Ascending aorta (tissue), 2 donors: ENCODE measurements at regions of chr2 and their contacts with region 1.

Region 1: DNA sequence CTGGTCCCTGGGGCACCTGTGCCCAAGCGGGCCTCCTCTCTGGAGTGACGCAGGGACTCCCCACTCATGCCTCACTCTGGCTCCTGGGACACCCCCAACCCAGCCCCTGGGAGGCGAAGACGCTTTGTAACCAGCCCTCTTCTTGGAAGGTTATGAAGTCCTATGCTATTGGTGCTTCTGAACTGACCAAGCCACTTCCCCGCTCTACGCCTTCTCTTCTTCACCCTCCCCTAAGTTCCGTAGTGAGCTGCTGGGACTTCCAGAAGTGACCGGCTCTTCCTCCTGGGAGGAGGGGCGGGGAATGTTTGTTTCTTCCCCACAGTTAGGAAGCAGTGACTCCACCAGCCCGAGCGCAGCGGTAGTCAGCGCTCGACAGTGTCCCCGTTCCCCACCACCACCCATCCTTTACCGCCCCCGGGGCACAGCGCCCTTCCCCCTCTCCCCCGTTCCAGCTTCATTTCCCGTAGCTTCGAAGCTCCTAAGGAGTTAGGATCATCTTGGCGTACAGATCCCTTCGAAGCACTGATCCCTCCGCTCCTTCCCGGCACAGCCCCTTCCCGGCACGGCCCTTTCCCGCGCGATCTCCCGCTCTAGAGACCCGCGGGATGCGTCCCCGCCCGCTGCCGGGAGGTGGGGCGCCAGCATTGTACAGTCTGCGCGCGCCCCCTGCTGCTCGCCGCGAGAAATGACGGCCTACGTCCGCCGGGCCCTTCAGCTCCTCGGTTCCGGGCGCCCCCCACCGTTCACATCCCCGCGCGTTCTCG is 25.3 kb upstream of the NOTO start:
- DNase-seq: peak; percentile 51 to 96
- H3K4me3 ChIP-seq: peak overlapping the region; percentile 46 to 83
- H3K27ac ChIP-seq: peak overlapping the region; percentile 59 to 85
- H3K4me1 ChIP-seq: peaks cover 9 to 19% of the 10 kb centered on the region in 2 donors
- H3K27me3 ChIP-seq: no peaks in the 10 kb centered on the region
- CTCF ChIP-seq: peak; percentile 98 to 99 (median 99)

Region 2: DNA sequence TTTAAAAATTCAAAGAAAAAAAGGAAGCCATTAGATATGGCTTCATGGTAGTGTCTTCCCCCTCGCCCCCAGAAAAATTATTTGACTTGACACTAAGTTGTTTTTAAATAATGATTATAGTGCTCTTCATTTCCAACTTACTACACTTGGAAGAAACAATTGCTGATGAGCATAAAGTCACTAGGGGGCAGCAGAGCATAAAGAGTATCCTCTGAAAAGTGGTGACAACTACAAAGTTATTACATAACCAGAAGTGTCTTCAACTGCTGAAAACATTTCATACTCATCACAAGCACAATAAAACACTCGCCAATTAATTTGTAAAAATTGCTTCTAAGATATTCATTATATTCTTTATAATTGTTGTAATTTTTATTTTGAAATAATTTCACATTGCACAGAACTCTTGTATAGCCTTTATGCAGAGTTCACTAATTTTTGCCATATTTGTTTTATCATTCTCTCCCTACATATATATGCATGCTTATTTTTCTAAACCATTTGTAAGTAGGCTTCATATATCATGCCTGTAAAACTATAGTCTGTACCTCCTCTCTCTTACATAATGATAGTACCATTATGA is 406.1 kb before region 1 on chr2:
- intact Hi-C with region 1: loop called (anchors 10 kb)
- DNase-seq: peak in 1 of 2 donors; percentile 75
- H3K4me3 ChIP-seq: no peak overlapping the region
- H3K27ac ChIP-seq: no peak overlapping the region
- H3K4me1 ChIP-seq: no peaks in the 10 kb centered on the region
- H3K27me3 ChIP-seq: no peaks in the 10 kb centered on the region
- CTCF ChIP-seq: peak; percentile 72 to 85 (median 83)

Region 3: GRCh38 chr2:72993147-72993932 is 183.7 kb before region 1 on chr2:
- intact Hi-C with region 1: loop called (anchors 5 kb)
- DNase-seq: peak in 1 of 2 donors; percentile 64
- H3K4me3 ChIP-seq: no peak overlapping the region
- H3K27ac ChIP-seq: no peak overlapping the region
- H3K4me1 ChIP-seq: no peaks in the 10 kb centered on the region
- H3K27me3 ChIP-seq: no peaks in the 10 kb centered on the region
- CTCF ChIP-seq: peak; percentile 80 to 85 (median 82)

Region 4: DNA sequence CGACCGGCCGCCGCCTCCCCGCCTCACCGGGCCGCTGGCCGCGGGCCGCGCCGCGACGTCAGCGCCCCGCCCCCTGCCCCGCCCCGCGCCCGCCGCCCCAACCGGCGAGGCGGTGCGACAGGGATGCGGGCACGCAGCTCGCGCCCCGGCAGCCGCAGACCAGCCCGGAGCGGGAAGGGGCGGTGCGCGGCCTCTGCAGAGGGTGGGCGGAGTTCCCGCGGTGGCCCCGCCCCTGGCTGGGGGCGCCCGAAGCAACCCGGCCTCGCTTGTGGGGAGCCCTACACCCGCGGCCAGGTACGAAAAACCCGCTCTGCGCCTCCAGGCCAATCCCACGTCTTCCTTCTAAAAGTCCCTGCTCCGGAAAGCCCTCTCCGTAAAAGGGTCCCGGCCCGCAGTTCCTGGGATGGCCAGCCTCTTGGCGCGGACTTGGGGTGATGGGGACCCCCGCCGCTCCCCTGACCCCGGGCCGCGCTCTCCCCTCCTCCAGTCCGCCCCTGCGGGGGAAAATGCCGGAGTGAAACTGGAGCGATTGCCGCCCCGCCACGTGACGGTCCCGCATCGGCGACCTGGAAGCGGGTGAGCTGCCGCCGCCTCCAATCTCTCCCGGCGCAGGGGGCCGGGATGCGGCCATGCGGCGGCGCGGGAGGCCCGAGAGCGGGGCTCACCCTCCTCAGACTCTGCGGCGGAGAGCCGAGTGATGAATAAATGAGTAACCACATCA is 64.0 kb before region 1 on chr2 and contains the start of gene RAB11FIP5:
- intact Hi-C with region 1: loop called (anchors 2 kb)
- DNase-seq: peak in 1 of 2 donors; percentile 90
- H3K4me3 ChIP-seq: peak within 1 kb of the TSS; percentile 78 to 84
- H3K27ac ChIP-seq: peak within 1 kb of the TSS; percentile 92 to 98
- H3K4me1 ChIP-seq: peaks cover 0 to 18% of the 10 kb centered on the region in 2 donors
- H3K27me3 ChIP-seq: no peaks in the 10 kb centered on the region
- CTCF ChIP-seq: peak in 1 of 3 experiments; percentile 12
- total RNA-seq, gene RAB11FIP5: 95.3 TPM

Region 5: GRCh38 chr2:73212448-73213176 is 35.5 kb after region 1 on chr2:
- intact Hi-C with region 1: loop called (anchors 1 kb)
- DNase-seq: peak; percentile 19 to 92
- H3K4me3 ChIP-seq: peak overlapping the region in 1 of 2 donors; percentile 12
- H3K27ac ChIP-seq: peak overlapping the region; percentile 81 to 83
- H3K4me1 ChIP-seq: peaks cover 0 to 20% of the 10 kb centered on the region in 2 donors
- H3K27me3 ChIP-seq: no peaks in the 10 kb centered on the region
- CTCF ChIP-seq: peak; percentile 87 to 92 (median 88)